IMR-90 (cell line): ENCODE measurements at regions of chr12 and their contacts with region 1.

Region 1: DNA sequence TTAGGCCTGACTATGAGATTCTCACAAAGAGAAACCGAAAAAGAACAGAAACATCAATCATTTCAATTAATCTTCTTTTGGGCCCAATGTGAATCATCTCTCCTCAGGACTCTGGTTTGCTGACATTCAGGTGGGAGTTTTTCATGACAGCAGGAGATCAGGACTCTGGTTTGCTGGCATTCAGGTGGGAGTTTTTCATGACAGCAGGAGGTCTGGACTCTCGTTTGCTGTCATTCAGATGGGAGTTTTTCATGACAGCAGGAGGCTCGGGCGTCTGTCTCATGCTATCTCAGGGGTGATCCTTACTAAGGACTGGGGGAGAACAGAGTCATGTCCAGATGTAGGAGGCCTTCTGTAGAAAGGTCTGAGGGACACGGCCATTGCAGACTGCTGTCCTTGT is 40.1 kb upstream of the PARP11 start:
- DNase-seq: no peak
- ATAC-seq: no peak
- H3K4me3 ChIP-seq: no peak overlapping the region
- H3K27ac ChIP-seq: no peak overlapping the region
- H3K4me1 ChIP-seq: no peaks in the 10 kb centered on the region
- H3K27me3 ChIP-seq: 0 out of 2 replicates have a peak, but pooled peaks cover 1% of the 10 kb centered on the region
- CTCF ChIP-seq: no peak
- POLR2A ChIP-seq: no peak
- RAD21 ChIP-seq: no peak

Region 2: DNA sequence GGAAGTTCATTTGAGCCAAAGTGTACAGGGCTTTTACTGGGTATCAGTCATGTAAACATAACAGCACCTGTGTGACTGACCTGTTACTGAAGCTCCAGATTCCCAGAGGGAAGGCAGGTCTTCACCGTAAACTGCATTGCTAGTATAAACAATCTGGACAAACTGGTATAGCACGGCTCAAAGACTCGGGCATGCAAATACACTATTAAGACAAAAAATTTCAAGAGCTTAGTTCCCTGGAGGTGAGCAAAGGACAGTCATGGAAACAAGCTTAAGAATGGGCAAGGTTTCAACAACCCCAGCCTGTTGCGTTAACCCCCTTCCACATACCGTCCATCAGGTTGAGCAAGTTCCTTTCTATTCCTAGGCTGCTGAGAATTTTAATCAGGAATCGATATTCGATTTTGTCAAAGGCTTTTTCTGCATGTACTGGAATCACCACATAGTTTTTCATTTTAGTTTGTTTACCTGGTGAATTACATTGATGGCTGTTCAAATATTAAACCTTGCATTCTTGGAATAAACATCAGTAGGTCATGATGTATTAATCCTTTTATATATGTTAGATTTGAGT is 49.4 kb before region 1 on chr12:
- CTCF ChIA-PET with region 1: no interaction called
- POLR2A ChIA-PET with region 1: no interaction called
- dilution Hi-C with region 1: no loop called
- in situ Hi-C with region 1: loop called (anchors 10 kb)
- intact Hi-C with region 1: no loop called
- DNase-seq: no peak
- ATAC-seq: no peak
- H3K4me3 ChIP-seq: no peak overlapping the region
- H3K27ac ChIP-seq: no peak overlapping the region
- H3K4me1 ChIP-seq: no peaks in the 10 kb centered on the region
- H3K27me3 ChIP-seq: no peaks in the 10 kb centered on the region
- CTCF ChIP-seq: no peak
- POLR2A ChIP-seq: no peak
- RAD21 ChIP-seq: no peak

Region 3: GRCh38 chr12:3879846-3880245 is 33.4 kb before region 1 on chr12:
- CTCF ChIA-PET with region 1: no interaction called
- POLR2A ChIA-PET with region 1: no interaction called
- dilution Hi-C with region 1: no loop called
- in situ Hi-C with region 1: no loop called
- intact Hi-C with region 1: no loop called
- DNase-seq: no peak
- ATAC-seq: no peak
- H3K4me3 ChIP-seq: no peak overlapping the region
- H3K27ac ChIP-seq: no peak overlapping the region
- H3K4me1 ChIP-seq: peaks cover 1% of the 10 kb centered on the region; the same call in 1 of the 2 replicates
- H3K27me3 ChIP-seq: peaks cover 14% of the 10 kb centered on the region
- CTCF ChIP-seq: no peak
- POLR2A ChIP-seq: no peak
- RAD21 ChIP-seq: no peak

Region 4: GRCh38 chr12:4191642-4192041 is 278.4 kb after region 1 on chr12:
- CTCF ChIA-PET with region 1: no interaction called
- POLR2A ChIA-PET with region 1: no interaction called
- dilution Hi-C with region 1: no loop called
- in situ Hi-C with region 1: no loop called
- intact Hi-C with region 1: no loop called
- DNase-seq: no peak
- ATAC-seq: no peak
- H3K4me3 ChIP-seq: no peak overlapping the region
- H3K27ac ChIP-seq: no peak overlapping the region
- H3K4me1 ChIP-seq: no peaks in the 10 kb centered on the region
- H3K27me3 ChIP-seq: peaks cover 5% of the 10 kb centered on the region; the same call in 1 of the 2 replicates
- CTCF ChIP-seq: no peak
- POLR2A ChIP-seq: no peak
- RAD21 ChIP-seq: no peak

Region 5: GRCh38 chr12:4392223-4392742 is 479.0 kb after region 1 on chr12:
- CTCF ChIA-PET with region 1: no interaction called
- POLR2A ChIA-PET with region 1: no interaction called
- dilution Hi-C with region 1: no loop called
- in situ Hi-C with region 1: no loop called
- intact Hi-C with region 1: no loop called
- DNase-seq: no peak
- ATAC-seq: no peak
- H3K4me3 ChIP-seq: no peak overlapping the region
- H3K27ac ChIP-seq: no peak overlapping the region
- H3K4me1 ChIP-seq: no peaks in the 10 kb centered on the region
- H3K27me3 ChIP-seq: peaks cover 4% of the 10 kb centered on the region; the same call in 1 of the 2 replicates
- CTCF ChIP-seq: no peak
- POLR2A ChIP-seq: no peak
- RAD21 ChIP-seq: no peak